ENCODE measurements at regions of chr13 and their contacts with region 1.

Region 1: DNA sequence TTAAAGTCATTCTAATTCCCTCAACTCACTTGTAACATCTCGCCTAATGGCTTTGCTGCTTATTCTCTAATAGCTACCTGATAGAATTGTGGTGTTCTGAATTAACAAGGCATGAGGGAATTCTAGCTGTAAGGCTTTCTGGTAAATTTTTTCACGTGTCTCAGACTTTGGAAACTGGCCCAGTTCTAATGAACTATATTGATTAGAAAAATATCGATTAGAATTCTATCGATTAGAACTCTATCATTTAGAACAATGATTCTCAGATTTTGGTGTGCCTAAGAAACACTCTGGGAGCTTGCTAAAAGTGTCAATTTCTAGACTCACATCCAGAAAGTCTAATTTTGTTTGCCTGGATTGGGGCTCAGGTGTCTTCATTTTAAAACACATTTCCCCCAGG is 3.3 kb upstream of the GTF2F2 start:
- DNase-seq: no peak
- ATAC-seq: no peak
- H3K4me3 ChIP-seq: no peak overlapping the region
- H3K27ac ChIP-seq: no peak overlapping the region
- H3K4me1 ChIP-seq: peaks cover 0 to 7% of the 10 kb centered on the region in 2 donors
- H3K27me3 ChIP-seq: no peaks in the 10 kb centered on the region

Region 2: GRCh38 chr13:45055198-45055901 is 61.6 kb before region 1 on chr13:
- intact Hi-C with region 1: loop called in 1 of 2 experiments (anchors 2 kb)
- DNase-seq: no peak
- ATAC-seq: no peak
- H3K4me3 ChIP-seq: no peak overlapping the region
- H3K27ac ChIP-seq: no peak overlapping the region
- H3K4me1 ChIP-seq: no peaks in the 10 kb centered on the region
- H3K27me3 ChIP-seq: no peaks in the 10 kb centered on the region